Endothelial cell of umbilical vein (primary cell): ENCODE measurements at regions of chr17 and their contacts with region 1.

Region 1: DNA sequence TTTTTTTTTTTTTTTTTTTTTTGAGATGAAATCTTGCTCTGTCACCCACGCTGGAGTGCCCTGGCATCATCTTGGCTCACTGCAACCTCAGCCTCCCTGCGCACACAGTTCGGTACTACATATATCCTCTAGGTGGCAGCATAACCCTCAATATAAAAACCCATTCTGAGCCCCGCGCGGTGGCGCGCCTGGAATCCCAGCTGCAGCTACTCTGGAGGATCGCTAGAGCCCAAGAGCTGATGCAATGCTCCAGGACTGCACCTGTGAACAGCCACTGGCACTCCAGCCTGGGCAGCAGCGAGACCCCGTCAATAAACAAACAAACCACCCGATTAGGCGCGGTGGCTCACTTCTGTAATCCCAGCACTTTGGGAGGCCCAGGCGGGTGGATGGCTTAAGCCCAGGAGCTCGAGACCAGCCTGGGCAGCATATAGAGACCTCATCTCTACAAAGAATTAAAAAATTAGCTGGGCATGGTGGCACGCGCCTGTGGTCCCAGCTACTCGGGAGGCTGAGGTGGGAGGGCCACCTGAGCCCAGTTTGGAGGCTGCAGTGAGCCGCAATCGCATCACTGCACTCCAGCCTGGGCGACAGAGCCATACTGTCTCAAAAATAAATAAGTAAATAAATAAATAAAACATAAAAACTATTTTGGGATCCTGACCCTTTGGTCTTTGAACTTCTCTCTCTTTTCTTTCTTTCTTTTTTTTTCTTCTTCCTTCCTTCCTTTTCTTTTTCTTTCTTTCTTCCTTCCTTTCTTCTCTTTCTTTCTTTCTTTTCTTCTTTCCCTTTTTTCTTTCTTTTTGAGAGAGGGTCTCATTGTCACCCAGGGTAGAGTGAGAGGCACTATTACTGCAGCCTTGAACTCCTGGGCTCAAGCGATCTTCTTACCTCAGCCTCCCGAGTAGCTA is 15.4 kb upstream of the AKAP10 start:
- DNase-seq: peak; percentile 85
- H3K4me3 ChIP-seq: no peak overlapping the region
- H3K27ac ChIP-seq: no peak overlapping the region
- H3K4me1 ChIP-seq: no peaks in the 10 kb centered on the region
- H3K27me3 ChIP-seq: peaks cover 2 to 5% of the 10 kb centered on the region in 2 experiments
- CTCF ChIP-seq: peak; percentile 60 to 69
- POLR2A ChIP-seq: no peak

Region 2: DNA sequence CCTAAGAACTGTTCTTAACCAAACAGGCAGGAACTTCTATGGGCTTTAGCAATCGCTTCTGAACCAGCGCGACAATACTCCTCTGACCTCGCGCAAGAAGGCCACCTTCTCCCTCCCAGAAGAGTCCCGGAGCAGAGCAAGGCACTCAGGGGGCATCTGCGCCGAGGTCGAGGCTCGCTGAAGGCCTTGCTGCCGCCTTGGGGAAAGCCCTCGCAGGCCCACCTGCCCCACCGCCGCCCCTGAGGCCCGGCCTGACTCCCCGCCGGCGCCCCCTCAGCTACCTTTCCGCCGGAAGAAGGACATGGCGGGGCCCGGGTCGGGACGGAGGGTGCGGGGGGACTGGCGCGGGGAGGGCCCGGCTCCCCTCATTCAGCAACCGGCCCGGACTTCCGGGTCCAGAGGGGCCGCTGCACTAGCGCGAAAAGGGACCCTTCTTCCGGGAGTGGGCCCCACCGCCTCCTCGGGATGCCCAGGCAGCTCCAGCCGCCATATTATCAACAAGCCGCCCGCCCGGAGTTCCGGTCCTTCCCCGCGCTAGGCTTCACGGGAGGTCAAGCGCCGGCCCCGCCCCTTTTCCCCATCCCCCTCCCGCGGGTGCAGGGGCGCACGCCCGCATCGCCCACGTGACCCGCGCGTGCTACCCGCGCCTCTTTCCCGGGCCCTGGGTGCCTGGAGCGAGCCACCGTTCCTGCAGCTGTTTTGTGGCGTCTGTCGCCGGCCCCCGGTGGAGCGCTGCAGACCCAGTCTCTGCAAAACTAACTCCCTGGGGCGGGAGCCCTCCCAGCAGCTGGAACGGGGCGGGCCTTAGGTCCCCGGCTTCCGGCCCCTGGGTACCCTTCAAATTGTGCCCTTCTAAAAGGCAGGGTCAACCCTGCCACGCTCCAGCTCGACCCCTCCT is 15.5 kb before region 1 on chr17 and contains the start of gene AKAP10:
- CTCF ChIA-PET with region 1: interaction called, 10 read pairs
- POLR2A ChIA-PET with region 1: no interaction called
- dilution Hi-C with region 1: no loop called
- intact Hi-C with region 1: no loop called
- DNase-seq: peak; percentile 79
- H3K4me3 ChIP-seq: peak within 1 kb of the TSS; percentile 58 to 95 (median 82)
- H3K27ac ChIP-seq: peak within 1 kb of the TSS; percentile 70
- H3K4me1 ChIP-seq: peaks cover 7% of the 10 kb centered on the region
- H3K27me3 ChIP-seq: no peaks in the 10 kb centered on the region
- CTCF ChIP-seq: no peak
- POLR2A ChIP-seq: peak; percentile 84
- total RNA-seq, gene AKAP10: 25.3 and 27.1 TPM in 2 replicates

Region 3: DNA sequence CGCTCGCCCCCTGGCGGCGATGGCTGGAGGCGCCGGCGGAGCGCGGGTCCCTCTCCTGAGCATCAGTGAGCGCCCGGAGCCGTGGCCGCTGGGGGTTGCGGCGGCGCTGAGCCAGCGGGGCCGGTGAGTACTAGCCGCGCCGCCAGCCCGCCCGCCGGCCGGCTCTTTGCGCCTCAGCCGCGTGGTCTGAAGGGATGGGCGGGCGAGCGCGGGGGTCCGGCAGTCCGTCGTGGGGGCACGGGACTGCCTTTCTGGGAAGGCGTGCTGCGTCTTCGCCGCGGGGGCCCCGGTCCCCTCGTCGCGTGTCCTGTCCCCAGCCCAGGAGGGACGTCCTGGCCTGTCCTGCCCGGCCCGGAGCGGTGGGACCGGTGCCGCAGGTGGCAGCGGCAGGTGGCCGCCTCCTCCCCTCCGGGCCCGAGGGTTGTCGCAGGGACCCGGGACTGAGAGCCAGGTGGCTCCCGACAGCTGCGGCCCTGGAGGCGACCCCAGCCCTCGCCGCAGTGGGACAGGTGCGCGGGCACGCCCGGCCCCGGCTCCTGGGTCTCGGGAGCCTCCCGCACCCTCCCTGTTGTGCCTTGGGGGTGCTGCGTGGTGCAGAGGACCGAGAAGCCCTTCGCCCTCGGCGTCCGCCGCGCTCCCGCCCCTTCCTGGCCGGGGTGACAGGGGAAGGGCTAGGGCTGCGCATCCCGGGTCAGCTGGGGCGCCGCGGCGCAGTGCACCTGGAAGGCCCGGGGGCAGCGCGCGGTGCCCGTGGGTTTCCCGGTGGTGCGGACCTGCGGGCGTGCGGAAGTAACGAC is 16.4 kb after region 1 on chr17 and contains the start of gene SPECC1:
- CTCF ChIA-PET with region 1: interaction called, 95 read pairs
- POLR2A ChIA-PET with region 1: no interaction called
- dilution Hi-C with region 1: no loop called
- intact Hi-C with region 1: loop called (anchors 1 kb)
- DNase-seq: peak; percentile 71
- H3K4me3 ChIP-seq: peak within 1 kb of the TSS; percentile 34 to 59 (median 39)
- H3K27ac ChIP-seq: no peak within 1 kb of the TSS
- H3K4me1 ChIP-seq: peaks cover 9% of the 10 kb centered on the region
- H3K27me3 ChIP-seq: peaks cover 17 to 50% of the 10 kb centered on the region in 2 experiments
- CTCF ChIP-seq: peak; percentile 88 to 97
- POLR2A ChIP-seq: no peak
- total RNA-seq, gene SPECC1: 15.0 and 20.4 TPM in 2 replicates

Region 4: GRCh38 chr17:20095336-20096080 is 102.5 kb after region 1 on chr17:
- CTCF ChIA-PET with region 1: interaction called, 25 read pairs
- POLR2A ChIA-PET with region 1: no interaction called
- dilution Hi-C with region 1: no loop called
- intact Hi-C with region 1: loop called (anchors 1 kb)
- DNase-seq: peak; percentile 27
- H3K4me3 ChIP-seq: no peak overlapping the region
- H3K27ac ChIP-seq: no peak overlapping the region
- H3K4me1 ChIP-seq: no peaks in the 10 kb centered on the region
- H3K27me3 ChIP-seq: peaks cover 2 to 8% of the 10 kb centered on the region in 2 experiments
- CTCF ChIP-seq: peak in 1 of 2 donors; percentile 33
- POLR2A ChIP-seq: no peak

Region 5: GRCh38 chr17:20114466-20114865 is 121.4 kb after region 1 on chr17:
- CTCF ChIA-PET with region 1: interaction called, 125 read pairs
- POLR2A ChIA-PET with region 1: no interaction called
- dilution Hi-C with region 1: no loop called
- intact Hi-C with region 1: loop called (anchors 1 kb)
- DNase-seq: no peak
- H3K4me3 ChIP-seq: no peak overlapping the region
- H3K27ac ChIP-seq: no peak overlapping the region
- H3K4me1 ChIP-seq: no peaks in the 10 kb centered on the region
- H3K27me3 ChIP-seq: peaks cover 0 to 7% of the 10 kb centered on the region in 2 experiments
- CTCF ChIP-seq: no peak
- POLR2A ChIP-seq: no peak

Region 6: GRCh38 chr17:20121359-20122253 is 128.5 kb after region 1 on chr17:
- CTCF ChIA-PET with region 1: interaction called, 125 read pairs
- POLR2A ChIA-PET with region 1: no interaction called
- dilution Hi-C with region 1: no loop called
- intact Hi-C with region 1: loop called (anchors 1 kb)
- DNase-seq: peak; percentile 52
- H3K4me3 ChIP-seq: no peak overlapping the region
- H3K27ac ChIP-seq: no peak overlapping the region
- H3K4me1 ChIP-seq: no peaks in the 10 kb centered on the region
- H3K27me3 ChIP-seq: no peaks in the 10 kb centered on the region
- CTCF ChIP-seq: peak; percentile 73 to 82
- POLR2A ChIP-seq: no peak